Activated CD8-positive, alpha-beta T cell treated with anti-CD3 and anti-CD28 coated beads for 36 hours (primary cell): ENCODE measurements at regions of chr3 and their contacts with region 1.

Region 1: DNA sequence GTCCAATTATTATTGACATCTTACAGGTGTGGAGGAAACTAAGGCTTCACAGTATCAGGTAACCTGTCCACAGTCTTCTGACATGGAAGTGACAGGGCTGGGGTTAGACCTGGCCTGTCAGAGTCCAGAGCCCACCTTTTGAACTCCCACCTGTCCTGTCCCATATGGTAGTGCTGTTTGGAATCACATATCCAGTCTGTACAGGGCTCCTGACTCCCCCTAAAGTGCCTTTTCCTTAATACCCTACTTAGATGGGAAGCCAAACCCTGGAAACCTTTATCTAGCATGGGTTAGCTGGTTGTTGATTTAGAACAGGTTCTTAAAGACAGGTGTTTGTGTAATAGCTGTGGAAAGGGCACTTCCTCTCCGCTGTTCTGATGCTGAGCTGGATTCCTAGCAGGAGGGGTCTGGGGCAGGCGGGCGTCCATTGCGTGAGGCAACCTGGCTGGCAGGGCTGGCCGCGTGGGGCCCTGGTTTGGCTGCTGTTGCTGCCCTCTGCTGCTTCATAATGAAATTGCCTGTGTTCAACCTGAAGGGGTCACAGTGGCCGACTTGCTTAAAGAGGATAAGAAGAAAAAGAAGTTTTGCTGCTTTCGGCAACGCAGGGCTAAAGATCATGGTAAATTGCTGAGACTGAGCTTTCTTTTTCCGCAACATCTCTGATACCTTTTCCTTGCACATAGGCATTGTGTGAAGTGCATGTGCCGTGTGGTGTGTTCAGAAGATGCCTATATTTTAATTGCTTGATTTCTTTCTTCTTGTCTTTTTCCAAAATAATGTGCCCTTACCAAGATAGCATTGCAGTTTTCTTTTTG is 136.2 kb downstream of the CHDH start:
- DNase-seq: peak; percentile 76
- ATAC-seq: peak; percentile 89
- H3K4me3 Mint-ChIP-seq: no peak overlapping the region
- H3K27ac Mint-ChIP-seq: no peak overlapping the region
- H3K4me1 Mint-ChIP-seq: peaks cover 7% of the 10 kb centered on the region
- H3K27me3 Mint-ChIP-seq: no peaks in the 10 kb centered on the region
- CTCF ChIP-seq: peak; percentile 72

Region 2: DNA sequence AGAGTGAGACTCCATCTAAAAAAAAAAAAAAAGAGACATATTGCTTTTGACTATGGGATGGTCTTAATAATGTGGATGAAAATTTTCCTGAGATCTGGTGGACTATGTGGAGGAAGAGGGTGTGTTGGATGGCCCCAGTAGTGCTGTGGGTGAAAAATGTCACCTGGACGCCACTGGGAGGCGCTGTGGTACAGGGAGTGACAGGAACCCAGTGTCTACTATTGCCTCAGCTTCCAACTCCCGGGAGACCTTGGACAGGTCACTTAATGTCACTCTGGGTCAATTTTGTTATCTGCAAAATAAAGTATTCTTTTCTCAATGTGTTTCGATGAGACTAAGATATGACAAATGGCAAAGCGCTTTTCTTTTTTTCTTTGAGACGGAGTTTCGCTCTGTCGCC is 335.0 kb before region 1 on chr3:
- CTCF ChIA-PET with region 1: interaction called, 10 read pairs
- POLR2A ChIA-PET with region 1: no interaction called
- intact Hi-C with region 1: loop called (anchors 2 kb)
- DNase-seq: peak; percentile 69
- ATAC-seq: peak; percentile 73
- H3K4me3 Mint-ChIP-seq: no peak overlapping the region
- H3K27ac Mint-ChIP-seq: no peak overlapping the region
- H3K4me1 Mint-ChIP-seq: no peaks in the 10 kb centered on the region
- H3K27me3 Mint-ChIP-seq: peaks cover 17% of the 10 kb centered on the region
- CTCF ChIP-seq: peak; percentile 81

Region 3: DNA sequence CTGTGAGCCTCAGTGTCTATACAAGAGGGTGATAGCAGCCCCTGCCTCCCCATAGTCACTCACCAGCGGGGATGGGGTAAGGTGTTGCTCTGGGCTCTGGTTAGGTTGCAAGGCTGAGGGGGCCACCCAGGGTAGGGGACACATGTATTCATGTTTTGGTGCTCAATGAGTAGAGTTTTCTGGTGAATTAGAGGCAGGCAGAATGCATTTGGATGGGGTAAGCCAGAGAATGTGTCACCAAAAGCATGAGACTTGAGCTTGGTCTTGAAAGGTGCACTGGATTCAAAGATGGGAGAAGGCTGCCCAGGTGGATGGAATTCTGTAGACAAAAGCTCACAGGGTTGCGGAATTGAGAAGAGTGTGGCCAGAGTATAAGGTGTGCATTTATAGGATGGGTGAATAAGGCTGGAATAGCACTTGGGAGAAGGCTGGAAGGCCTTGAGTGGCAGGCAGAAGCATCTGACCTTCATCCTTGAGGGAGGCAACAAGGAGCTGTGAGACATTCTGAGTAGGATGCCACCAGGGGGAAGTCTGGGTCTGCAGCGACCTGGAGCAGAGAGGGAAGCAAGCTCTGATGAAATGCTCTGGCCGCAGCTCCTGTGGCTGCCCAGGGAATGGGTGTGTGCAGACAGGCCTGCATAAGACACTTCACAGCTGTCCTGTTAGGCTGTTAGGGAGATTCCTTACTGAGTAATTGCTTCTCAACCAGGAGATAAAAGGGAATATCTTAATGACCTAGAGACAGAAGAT is 13.5 kb before region 1 on chr3:
- CTCF ChIA-PET with region 1: interaction called, 20 read pairs
- POLR2A ChIA-PET with region 1: no interaction called
- intact Hi-C with region 1: no loop called
- DNase-seq: no peak
- ATAC-seq: no peak
- H3K4me3 Mint-ChIP-seq: no peak overlapping the region
- H3K27ac Mint-ChIP-seq: no peak overlapping the region
- H3K4me1 Mint-ChIP-seq: peaks cover 2% of the 10 kb centered on the region
- H3K27me3 Mint-ChIP-seq: peaks cover 8% of the 10 kb centered on the region
- CTCF ChIP-seq: no peak

Region 4: GRCh38 chr3:53721187-53722119 is 11.4 kb after region 1 on chr3:
- CTCF ChIA-PET with region 1: interaction called, 20 read pairs
- POLR2A ChIA-PET with region 1: no interaction called
- intact Hi-C with region 1: no loop called
- DNase-seq: peak; percentile 5
- ATAC-seq: peak; percentile 39
- H3K4me3 Mint-ChIP-seq: no peak overlapping the region
- H3K27ac Mint-ChIP-seq: no peak overlapping the region
- H3K4me1 Mint-ChIP-seq: no peaks in the 10 kb centered on the region
- H3K27me3 Mint-ChIP-seq: peaks cover 15% of the 10 kb centered on the region
- CTCF ChIP-seq: no peak